ENCODE measurements at regions of chr12 and their contacts with region 1.

Region 1: DNA sequence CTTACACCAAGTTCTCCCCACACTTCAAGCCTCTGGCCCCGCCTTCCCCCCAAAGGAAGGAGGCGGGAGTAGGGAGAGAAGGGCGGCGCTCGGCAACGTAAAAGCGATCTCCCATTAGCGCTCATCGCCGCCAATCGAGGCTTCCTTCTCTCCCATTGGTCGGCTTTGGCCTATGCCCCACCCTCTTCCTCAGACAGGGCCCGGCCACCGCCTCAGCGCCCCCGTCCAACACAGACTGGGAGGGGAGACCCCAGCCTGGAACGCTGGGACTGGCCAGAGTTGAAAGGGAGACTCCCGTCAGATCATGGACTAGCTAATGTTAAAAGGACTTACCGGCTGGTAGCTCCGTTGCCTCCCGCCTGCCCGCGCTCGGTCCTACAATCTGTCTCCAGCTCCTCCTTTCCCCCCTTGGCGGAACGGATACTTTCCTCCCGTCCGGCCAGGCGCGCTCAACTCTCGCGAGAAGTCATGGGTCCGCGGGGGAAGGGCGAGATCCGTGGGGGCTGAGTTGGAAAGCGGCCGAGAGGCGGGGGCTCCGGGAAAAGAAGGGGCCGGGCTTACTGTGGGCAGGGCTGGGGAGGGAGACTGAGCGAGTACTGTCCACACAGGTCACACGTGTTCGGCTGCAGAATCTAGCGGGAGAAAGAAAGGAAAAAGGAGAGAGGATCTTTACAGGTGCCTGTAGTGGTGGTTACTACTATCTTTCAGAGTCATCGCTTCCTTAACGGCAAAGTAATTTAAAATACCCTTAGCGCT is at the start of gene ATF7:
- H3K4me3 Mint-ChIP-seq: peak within 1 kb of the TSS; percentile 97
- H3K27ac Mint-ChIP-seq: peak within 1 kb of the TSS; percentile 89
- H3K4me1 Mint-ChIP-seq: peaks cover 35% of the 10 kb centered on the region
- H3K27me3 Mint-ChIP-seq: no peaks in the 10 kb centered on the region

Region 2: GRCh38 chr12:53675651-53676453 is 49.7 kb after region 1 on chr12 and contains the start of gene ATP5MC2:
- intact Hi-C with region 1: loop called (anchors 1 kb)
- H3K4me3 Mint-ChIP-seq: peak within 1 kb of the TSS; percentile 83
- H3K27ac Mint-ChIP-seq: peak within 1 kb of the TSS; percentile 95
- H3K4me1 Mint-ChIP-seq: peaks cover 32% of the 10 kb centered on the region
- H3K27me3 Mint-ChIP-seq: peaks cover 13% of the 10 kb centered on the region